Sigmoid colon (tissue), 7 donors: ENCODE measurements at regions of chr14 and their contacts with region 1.

Region 1: GRCh38 chr14:29927376-29928116 is at the start of gene PRKD1:
- DNase-seq: peak; percentile 78
- H3K4me3 ChIP-seq: peak within 1 kb of the TSS; percentile 67 to 88 (median 72)
- H3K27ac ChIP-seq: peak within 1 kb of the TSS; percentile 83 to 85 (median 84)
- H3K4me1 ChIP-seq: peaks cover 0 to 32% (median 22%) of the 10 kb centered on the region in 4 donors
- H3K27me3 ChIP-seq: no peaks in the 10 kb centered on the region
- CTCF ChIP-seq: peak in 1 of 4 experiments; percentile 41
- EP300 ChIP-seq: no peak
- POLR2A ChIP-seq: no peak
- total RNA-seq, gene PRKD1: 14.5 to 27.1 (median 22.8) TPM

Region 2: GRCh38 chr14:29548948-29549370 is 378.6 kb before region 1 on chr14:
- intact Hi-C with region 1: loop called (anchors 5 kb)
- DNase-seq: no peak
- H3K4me3 ChIP-seq: no peak overlapping the region
- H3K27ac ChIP-seq: no peak overlapping the region
- H3K4me1 ChIP-seq: no peaks in the 10 kb centered on the region
- H3K27me3 ChIP-seq: no peaks in the 10 kb centered on the region
- CTCF ChIP-seq: peak; percentile 26 to 69 (median 36)
- EP300 ChIP-seq: no peak
- POLR2A ChIP-seq: no peak

Region 3: DNA sequence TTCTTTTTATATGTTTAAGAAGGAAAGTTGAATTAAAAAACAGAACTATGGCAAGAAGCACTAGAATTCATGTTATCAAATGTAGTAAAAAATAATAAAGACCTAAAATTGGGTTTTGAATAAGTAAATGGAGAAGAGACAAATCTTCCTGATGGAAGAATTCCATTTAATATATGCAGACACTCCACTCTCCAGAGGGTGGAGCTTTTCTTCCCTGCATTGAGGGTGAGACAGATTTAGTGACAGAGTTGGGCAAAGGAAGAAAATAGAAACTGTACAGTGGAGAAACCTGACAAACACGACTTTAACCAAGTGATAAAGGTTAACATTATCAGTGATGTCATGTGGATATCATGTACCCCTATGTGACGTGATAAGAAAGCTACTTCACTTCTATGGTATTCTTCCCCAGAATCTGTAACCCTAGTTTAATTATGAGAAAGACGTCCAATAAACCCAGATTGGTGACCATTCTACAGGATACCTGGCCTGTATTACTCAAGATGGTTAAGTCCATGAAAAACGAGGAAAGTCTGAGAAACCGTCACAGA is 217.5 kb before region 1 on chr14:
- intact Hi-C with region 1: no loop called
- DNase-seq: no peak
- H3K4me3 ChIP-seq: no peak overlapping the region
- H3K27ac ChIP-seq: no peak overlapping the region
- H3K4me1 ChIP-seq: no peaks in the 10 kb centered on the region
- H3K27me3 ChIP-seq: no peaks in the 10 kb centered on the region
- CTCF ChIP-seq: peak in 1 of 4 experiments; percentile 28
- EP300 ChIP-seq: no peak
- POLR2A ChIP-seq: no peak

Region 4: DNA sequence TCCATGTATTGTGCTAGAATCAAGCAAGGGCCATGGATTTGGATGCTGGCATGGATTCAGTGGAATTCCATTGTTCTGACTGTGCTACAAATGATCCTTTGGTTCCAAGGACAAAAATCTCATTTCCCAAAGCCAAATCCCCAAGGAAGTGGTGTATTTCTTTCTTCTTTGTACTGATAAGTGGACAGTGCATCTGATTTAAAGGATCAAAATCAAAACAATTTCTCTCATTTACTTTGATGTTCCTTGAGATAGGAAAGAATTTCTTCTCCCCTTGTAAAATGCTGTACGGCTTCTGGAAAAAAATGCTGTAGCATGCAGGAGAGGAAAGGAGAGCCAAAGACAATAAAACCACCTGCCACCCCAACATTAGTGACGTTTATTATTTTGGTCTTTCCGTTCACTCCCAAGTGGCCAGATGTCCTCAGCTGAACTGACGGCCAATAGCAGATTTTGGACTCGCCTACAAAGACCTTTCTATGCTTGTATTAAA is 185.6 kb before region 1 on chr14:
- intact Hi-C with region 1: loop called (anchors 5 kb)
- DNase-seq: no peak
- H3K4me3 ChIP-seq: no peak overlapping the region
- H3K27ac ChIP-seq: peak overlapping the region in 3 of 4 donors; percentile 55 to 74 (median 63)
- H3K4me1 ChIP-seq: peaks cover 0 to 73% (median 51%) of the 10 kb centered on the region in 4 donors
- H3K27me3 ChIP-seq: no peaks in the 10 kb centered on the region
- CTCF ChIP-seq: no peak
- EP300 ChIP-seq: peak in 2 of 4 donors; percentile 19 to 26
- POLR2A ChIP-seq: no peak

Region 5: DNA sequence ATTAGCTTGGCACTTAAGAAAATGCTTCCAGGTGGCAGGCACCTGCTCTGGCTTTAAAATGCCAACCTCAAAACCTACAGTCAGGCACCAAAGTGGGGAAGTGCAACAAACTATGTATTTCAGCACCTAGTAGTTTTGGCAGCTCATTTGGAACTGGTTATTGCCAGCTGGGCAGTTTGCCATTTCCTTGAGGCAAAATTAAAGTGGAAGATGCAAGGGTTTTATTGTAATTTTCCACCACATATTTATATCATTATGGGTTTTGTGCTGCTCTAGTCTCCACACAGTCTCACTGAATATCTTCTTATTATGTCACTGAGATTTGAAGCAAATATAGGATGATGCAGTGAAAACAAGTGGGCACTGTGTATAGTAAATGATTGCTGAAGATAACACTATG is 116.9 kb before region 1 on chr14:
- intact Hi-C with region 1: loop called (anchors 10 kb)
- DNase-seq: no peak
- H3K4me3 ChIP-seq: no peak overlapping the region
- H3K27ac ChIP-seq: no peak overlapping the region
- H3K4me1 ChIP-seq: peaks cover 0 to 40% (median 25%) of the 10 kb centered on the region in 4 donors
- H3K27me3 ChIP-seq: no peaks in the 10 kb centered on the region
- CTCF ChIP-seq: no peak
- EP300 ChIP-seq: no peak
- POLR2A ChIP-seq: no peak

Region 6: GRCh38 chr14:30005114-30005808 is 77.7 kb after region 1 on chr14:
- intact Hi-C with region 1: loop called (anchors 5 kb)
- DNase-seq: no peak
- H3K4me3 ChIP-seq: no peak overlapping the region
- H3K27ac ChIP-seq: no peak overlapping the region
- H3K4me1 ChIP-seq: peaks cover 0 to 8% (median 1%) of the 10 kb centered on the region in 4 donors
- H3K27me3 ChIP-seq: no peaks in the 10 kb centered on the region
- CTCF ChIP-seq: peak; percentile 32 to 74 (median 72)
- EP300 ChIP-seq: no peak
- POLR2A ChIP-seq: no peak